Activated CD4-positive, alpha-beta T cell treated with anti-CD3 and anti-CD28 coated beads for 36 hours (primary cell): ENCODE measurements at regions of chr4 and their contacts with region 1.

Region 1: DNA sequence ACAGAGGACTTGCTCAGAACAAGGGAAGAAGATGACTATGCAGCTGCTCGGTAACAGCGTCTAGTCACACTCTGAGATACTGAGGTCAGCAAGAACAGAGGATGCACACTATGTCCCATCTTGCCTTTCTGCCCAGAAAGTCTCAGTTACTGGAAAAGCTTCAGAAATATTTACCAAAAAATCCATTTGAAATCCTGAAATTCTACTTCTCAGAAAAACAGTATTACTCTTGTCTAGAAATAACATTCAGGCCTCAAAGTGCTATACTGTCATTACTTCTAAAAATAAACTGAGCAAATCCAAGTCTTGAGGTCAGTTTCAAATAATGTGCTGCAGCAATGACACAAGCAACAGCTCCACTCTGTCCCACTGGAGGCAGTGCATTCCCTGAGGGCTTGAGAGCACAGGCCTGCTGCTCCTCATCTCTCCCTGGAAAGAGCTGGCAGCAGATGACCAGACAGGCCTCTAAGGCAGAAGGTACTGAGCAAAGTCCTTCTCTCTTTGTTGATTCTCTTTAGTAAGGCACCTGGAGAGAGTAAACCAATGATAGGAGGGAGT is 76.9 kb downstream of the CAMK2D start:
- DNase-seq: peak; percentile 67
- ATAC-seq: peak; percentile 83
- H3K4me3 Mint-ChIP-seq: peak overlapping the region; percentile 32
- H3K27ac Mint-ChIP-seq: peak overlapping the region; percentile 95
- H3K4me1 Mint-ChIP-seq: peaks cover 84% of the 10 kb centered on the region
- H3K27me3 Mint-ChIP-seq: no peaks in the 10 kb centered on the region

Region 2: DNA sequence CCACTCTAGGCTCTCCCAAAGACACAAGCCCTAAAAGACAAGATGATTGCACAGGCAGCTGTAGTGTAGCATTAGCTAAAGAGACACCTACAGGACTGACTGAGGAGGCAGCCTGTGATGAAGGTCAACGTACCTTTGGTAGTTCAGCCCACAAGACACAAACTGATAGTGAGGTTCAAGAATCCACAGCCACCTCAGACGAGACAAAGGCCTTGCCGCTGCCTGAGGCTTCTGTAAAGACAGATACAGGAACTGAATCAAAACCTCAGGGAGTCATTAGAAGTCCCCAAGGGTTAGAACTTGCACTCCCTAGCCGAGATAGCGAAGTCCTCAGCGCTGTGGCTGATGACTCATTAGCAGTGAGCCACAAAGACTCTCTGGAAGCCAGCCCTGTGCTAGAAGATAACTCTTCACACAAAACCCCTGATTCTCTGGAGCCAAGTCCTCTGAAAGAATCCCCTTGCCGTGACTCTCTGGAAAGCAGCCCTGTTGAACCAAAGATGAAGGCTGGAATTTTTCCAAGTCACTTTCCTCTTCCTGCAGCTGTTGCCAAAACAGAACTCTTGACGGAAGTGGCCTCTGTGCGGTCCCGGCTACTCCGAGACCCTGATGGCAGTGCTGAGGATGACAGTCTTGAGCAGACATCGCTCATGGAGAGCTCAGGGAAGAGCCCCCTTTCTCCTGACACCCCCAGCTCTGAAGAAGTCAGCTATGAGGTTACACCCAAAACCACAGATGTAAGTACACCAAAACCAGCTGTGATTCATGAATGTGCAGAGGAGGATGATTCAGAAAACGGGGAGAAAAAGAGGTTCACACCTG is 328.9 kb before region 1 on chr4:
- CTCF ChIA-PET with region 1: no interaction called
- POLR2A ChIA-PET with region 1: no interaction called
- intact Hi-C with region 1: loop called (anchors 1 to 10 kb)
- DNase-seq: peak; percentile 88
- ATAC-seq: peak; percentile 95
- H3K4me3 Mint-ChIP-seq: peak overlapping the region; percentile 47
- H3K27ac Mint-ChIP-seq: peak overlapping the region; percentile 94
- H3K4me1 Mint-ChIP-seq: peaks cover 43% of the 10 kb centered on the region
- H3K27me3 Mint-ChIP-seq: peaks cover 42% of the 10 kb centered on the region

Region 3: DNA sequence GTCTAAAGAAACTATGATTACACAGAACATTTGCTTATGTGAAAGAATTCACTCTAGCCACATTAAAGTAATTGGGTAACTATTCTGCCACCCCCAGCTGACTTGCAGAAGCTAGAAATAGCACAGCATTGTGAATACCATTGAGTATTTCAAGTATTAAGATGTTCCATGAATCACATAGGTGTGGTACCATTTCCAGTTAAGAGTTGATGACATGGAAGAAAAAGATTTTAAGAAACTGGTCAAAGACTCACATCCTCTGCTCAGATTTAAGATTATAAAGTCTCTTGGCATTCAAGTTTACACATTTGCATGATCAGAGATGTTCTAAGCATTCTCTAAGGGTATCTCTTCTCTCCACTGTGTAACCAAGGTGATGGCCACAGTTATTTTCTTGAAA is 210.6 kb before region 1 on chr4:
- CTCF ChIA-PET with region 1: no interaction called
- POLR2A ChIA-PET with region 1: no interaction called
- intact Hi-C with region 1: loop called (anchors 1 to 5 kb)
- DNase-seq: peak; percentile 47
- ATAC-seq: peak; percentile 76
- H3K4me3 Mint-ChIP-seq: no peak overlapping the region
- H3K27ac Mint-ChIP-seq: peak overlapping the region; percentile 88
- H3K4me1 Mint-ChIP-seq: peaks cover 66% of the 10 kb centered on the region
- H3K27me3 Mint-ChIP-seq: no peaks in the 10 kb centered on the region

Region 4: DNA sequence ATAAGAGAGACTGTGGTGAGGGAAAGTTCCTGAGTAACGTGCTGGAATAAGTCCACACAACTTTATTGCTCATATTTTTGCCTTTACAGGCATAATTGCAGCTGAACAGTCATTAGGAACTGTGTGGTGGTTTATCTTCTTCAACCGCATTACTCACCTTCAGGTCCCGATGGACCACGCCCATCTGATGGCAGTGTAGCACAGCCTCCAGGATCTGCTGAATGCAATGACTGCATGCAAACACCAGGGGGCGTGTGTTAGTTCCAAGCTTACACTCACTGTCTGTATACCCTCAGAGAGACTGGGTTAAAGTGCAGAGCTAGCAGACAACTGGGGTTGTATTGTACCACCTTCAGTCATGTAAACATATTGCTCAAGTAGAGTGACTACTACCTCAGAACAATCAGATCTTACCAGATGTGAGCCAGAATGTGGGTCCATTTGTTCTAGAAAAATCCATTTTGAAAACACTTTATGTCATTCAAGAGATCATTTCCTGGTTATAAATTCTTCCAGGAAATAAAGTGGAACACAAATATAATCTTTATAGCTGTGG is 137.0 kb before region 1 on chr4:
- CTCF ChIA-PET with region 1: no interaction called
- POLR2A ChIA-PET with region 1: interaction called, 7 read pairs
- intact Hi-C with region 1: loop called (anchors 1 kb)
- DNase-seq: peak; percentile 95
- ATAC-seq: peak; percentile 99
- H3K4me3 Mint-ChIP-seq: no peak overlapping the region
- H3K27ac Mint-ChIP-seq: peak overlapping the region; percentile 49
- H3K4me1 Mint-ChIP-seq: peaks cover 24% of the 10 kb centered on the region
- H3K27me3 Mint-ChIP-seq: no peaks in the 10 kb centered on the region

Region 5: GRCh38 chr4:113636438-113636818 is 48.2 kb before region 1 on chr4:
- CTCF ChIA-PET with region 1: no interaction called
- POLR2A ChIA-PET with region 1: no interaction called
- intact Hi-C with region 1: loop called in 1 of 2 experiments (anchors 5 kb)
- DNase-seq: no peak
- ATAC-seq: peak; percentile 52
- H3K4me3 Mint-ChIP-seq: peak overlapping the region; percentile 29
- H3K27ac Mint-ChIP-seq: peak overlapping the region; percentile 72
- H3K4me1 Mint-ChIP-seq: peaks cover 49% of the 10 kb centered on the region
- H3K27me3 Mint-ChIP-seq: no peaks in the 10 kb centered on the region

Region 6: DNA sequence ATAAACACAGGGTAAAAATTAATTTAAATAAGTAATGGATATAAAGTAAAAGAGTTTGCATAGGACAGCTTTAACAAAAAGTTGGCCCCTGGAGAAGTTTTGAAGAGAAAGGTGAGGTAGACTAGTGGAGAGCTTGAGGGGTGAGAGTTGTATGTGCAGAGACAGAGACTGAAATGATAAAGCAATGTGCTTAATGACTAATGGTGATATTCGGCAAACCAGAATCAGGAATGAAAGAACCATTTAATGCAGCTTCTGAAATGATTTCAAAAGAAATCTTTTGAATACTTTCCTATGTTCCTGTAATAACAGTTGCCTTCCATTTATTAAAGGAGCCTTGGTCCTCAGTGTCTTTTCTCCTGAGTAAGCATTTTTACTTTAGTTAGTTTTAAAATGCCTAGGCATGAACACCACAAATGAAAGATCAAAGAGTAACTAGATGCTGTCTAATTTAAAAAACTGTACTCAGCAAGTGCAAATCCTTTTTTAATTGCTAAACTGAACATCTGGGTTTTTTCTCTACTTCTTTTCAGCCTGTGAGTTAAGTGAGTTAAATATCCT is 48.4 kb after region 1 on chr4:
- CTCF ChIA-PET with region 1: no interaction called
- POLR2A ChIA-PET with region 1: no interaction called
- intact Hi-C with region 1: loop called (anchors 1 to 2 kb)
- DNase-seq: no peak
- ATAC-seq: peak; percentile 60
- H3K4me3 Mint-ChIP-seq: no peak overlapping the region
- H3K27ac Mint-ChIP-seq: peak overlapping the region; percentile 1
- H3K4me1 Mint-ChIP-seq: peaks cover 78% of the 10 kb centered on the region
- H3K27me3 Mint-ChIP-seq: no peaks in the 10 kb centered on the region

Region 7: DNA sequence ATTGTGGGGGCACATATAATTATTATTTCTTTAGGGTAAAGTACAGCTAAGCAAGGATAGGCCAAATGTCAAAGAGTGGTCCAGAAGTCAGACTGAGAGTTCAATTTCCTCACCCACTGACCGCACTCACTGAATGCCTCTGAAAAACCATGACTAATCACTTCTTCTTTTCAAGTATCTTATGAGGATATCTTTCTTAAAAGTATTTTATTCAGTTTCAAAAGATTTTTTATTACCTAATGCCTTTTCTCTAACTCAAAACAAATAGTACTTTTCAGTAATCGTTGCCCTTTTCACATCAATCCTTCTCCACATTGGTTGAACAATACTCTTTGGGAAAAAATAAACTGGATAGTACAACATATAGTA is 138.7 kb after region 1 on chr4:
- CTCF ChIA-PET with region 1: no interaction called
- POLR2A ChIA-PET with region 1: no interaction called
- intact Hi-C with region 1: loop called (anchors 1 to 10 kb)
- DNase-seq: peak; percentile 12
- ATAC-seq: no peak
- H3K4me3 Mint-ChIP-seq: no peak overlapping the region
- H3K27ac Mint-ChIP-seq: peak overlapping the region; percentile 40
- H3K4me1 Mint-ChIP-seq: peaks cover 62% of the 10 kb centered on the region
- H3K27me3 Mint-ChIP-seq: no peaks in the 10 kb centered on the region